Mammary epithelial cell (primary cell): ENCODE measurements at regions of chr1 and their contacts with region 1.

Region 1: GRCh38 chr1:15578921-15579682 is 5.7 kb downstream of the AGMAT start:
- DNase-seq: no peak
- H3K4me3 ChIP-seq: no peak overlapping the region
- H3K27ac ChIP-seq: no peak overlapping the region
- H3K4me1 ChIP-seq: peaks cover 5% of the 10 kb centered on the region
- H3K27me3 ChIP-seq: no peaks in the 10 kb centered on the region
- CTCF ChIP-seq: no peak

Region 2: GRCh38 chr1:15543589-15544568 is 35.2 kb before region 1 on chr1:
- CTCF ChIA-PET with region 1: no interaction called
- dilution Hi-C with region 1: loop called (anchors 5 kb)
- in situ Hi-C with region 1: no loop called
- intact Hi-C with region 1: no loop called
- DNase-seq: no peak
- H3K4me3 ChIP-seq: no peak overlapping the region
- H3K27ac ChIP-seq: no peak overlapping the region
- H3K4me1 ChIP-seq: no peaks in the 10 kb centered on the region
- H3K27me3 ChIP-seq: no peaks in the 10 kb centered on the region
- CTCF ChIP-seq: no peak

Region 3: DNA sequence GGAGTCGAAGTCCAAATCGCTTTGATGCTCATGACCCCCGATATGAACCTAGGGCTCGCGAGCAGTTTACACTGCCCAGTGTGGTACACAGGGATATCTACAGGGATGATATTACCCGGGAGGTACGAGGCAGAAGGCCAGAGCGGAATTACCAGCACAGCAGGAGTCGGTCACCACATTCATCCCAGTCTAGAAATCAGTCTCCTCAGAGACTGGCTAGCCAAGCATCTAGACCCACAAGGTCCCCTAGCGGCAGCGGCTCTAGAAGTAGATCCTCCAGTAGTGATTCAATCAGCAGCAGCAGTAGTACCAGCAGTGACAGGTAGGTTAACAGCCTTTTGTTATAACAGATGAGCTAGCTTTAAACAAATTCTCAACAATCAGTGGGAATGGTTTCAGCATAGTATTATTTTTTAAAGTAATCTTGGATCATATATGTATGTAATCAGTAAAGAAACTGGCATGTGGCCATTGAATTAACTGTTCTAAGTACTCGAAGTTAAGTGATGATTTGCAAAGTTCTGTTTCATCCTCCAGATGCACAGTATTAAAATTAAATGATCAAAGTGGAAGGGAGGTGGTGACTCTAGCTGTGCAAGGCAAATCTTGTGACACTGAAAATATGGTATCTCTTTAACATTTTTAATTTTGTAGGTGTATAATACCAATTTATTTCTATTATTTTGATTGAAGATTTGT is 297.4 kb after region 1 on chr1:
- CTCF ChIA-PET with region 1: no interaction called
- dilution Hi-C with region 1: no loop called
- in situ Hi-C with region 1: no loop called
- intact Hi-C with region 1: no loop called
- DNase-seq: no peak
- H3K4me3 ChIP-seq: no peak overlapping the region
- H3K27ac ChIP-seq: no peak overlapping the region
- H3K4me1 ChIP-seq: no peaks in the 10 kb centered on the region
- H3K27me3 ChIP-seq: no peaks in the 10 kb centered on the region
- CTCF ChIP-seq: peak; percentile 28